ENCODE measurements at regions of chr19 and their contacts with region 1.

Region 1: DNA sequence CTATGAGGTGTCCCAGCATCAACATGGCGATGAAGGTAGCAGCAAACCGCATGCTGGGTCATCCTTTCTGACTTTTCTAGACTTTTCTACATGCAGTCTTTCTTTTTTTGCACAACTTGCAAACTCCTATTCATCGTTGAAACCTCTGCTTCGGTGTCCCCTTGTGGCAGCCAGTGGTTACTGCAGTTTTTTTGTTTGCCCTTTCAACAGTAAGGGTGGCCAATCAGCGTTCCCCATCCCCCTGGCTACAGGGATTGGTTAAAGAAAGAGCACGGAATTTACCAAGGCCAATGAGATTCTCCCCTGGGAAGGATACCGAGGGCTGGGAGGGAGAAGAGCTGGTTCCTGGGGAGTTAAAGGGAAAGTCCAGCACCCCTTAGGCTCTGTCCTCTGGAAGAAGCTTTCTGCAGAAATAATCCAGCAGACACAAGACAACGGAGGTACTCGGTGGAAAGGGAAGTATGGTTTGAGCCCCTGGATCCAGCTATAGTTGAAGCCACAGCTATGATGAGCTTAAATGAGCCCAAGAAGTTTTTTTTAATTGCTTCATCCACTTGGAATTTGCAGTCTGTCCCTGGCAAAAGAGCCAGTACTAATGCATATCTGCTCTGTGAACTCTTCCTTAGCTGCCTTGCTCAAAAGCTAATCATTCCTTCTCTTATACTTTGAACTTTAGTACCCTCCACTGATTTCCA is 5.6 kb upstream of the LSM4 start:
- DNase-seq: peak; percentile 76 to 94 (median 82)
- ATAC-seq: peak; percentile 99
- H3K4me3 ChIP-seq: peak overlapping the region; percentile 31
- H3K4me3 Mint-ChIP-seq: peak overlapping the region; percentile 47
- H3K27ac ChIP-seq: no peak overlapping the region
- H3K27ac Mint-ChIP-seq: peak overlapping the region; percentile 6
- H3K4me1 ChIP-seq: peaks cover 24% of the 10 kb centered on the region
- H3K4me1 Mint-ChIP-seq: peaks cover 17% of the 10 kb centered on the region
- H3K27me3 ChIP-seq: no peaks in the 10 kb centered on the region
- H3K27me3 Mint-ChIP-seq: no peaks in the 10 kb centered on the region
- CTCF ChIP-seq: peak; percentile 92

Region 2: DNA sequence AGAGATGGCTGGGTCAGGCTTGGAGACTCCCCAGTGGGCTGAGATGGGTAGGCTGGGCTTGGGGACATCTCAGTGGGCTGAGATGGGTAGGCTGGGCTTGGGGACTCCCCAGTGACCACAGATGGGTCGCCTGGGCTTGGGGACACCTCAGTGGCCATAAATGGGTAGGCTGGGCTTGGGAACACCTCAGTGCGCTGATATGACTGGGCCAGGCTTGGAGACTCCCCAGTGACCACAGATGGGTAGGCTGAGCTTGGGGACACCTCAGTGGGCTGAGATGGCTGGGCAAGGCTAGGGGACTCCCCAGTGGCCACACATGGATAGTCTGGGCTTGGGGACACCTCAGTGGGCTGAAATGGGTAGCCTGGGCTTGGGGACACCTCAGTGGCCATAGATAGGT is 67.0 kb before region 1 on chr19:
- CTCF ChIA-PET with region 1: no interaction called
- POLR2A ChIA-PET with region 1: no interaction called
- intact Hi-C with region 1: no loop called
- DNase-seq: peak in 1 of 14 experiments; percentile 50
- ATAC-seq: no peak
- H3K4me3 ChIP-seq: no peak overlapping the region
- H3K4me3 Mint-ChIP-seq: no peak overlapping the region
- H3K27ac ChIP-seq: no peak overlapping the region
- H3K27ac Mint-ChIP-seq: no peak overlapping the region
- H3K4me1 ChIP-seq: peaks cover 17% of the 10 kb centered on the region
- H3K4me1 Mint-ChIP-seq: peaks cover 5% of the 10 kb centered on the region
- H3K27me3 ChIP-seq: no peaks in the 10 kb centered on the region
- H3K27me3 Mint-ChIP-seq: no peaks in the 10 kb centered on the region
- CTCF ChIP-seq: no peak

Region 3: GRCh38 chr19:18291590-18292461 is 36.7 kb before region 1 on chr19:
- CTCF ChIA-PET with region 1: interaction called, 3 read pairs
- POLR2A ChIA-PET with region 1: interaction called, 761 read pairs
- intact Hi-C with region 1: loop called in 1 of 2 experiments (anchors 5 kb)
- DNase-seq: peak; percentile 51 to 93 (median 69)
- ATAC-seq: peak; percentile 41
- H3K4me3 ChIP-seq: peak overlapping the region; percentile 91
- H3K4me3 Mint-ChIP-seq: peak overlapping the region; percentile 89
- H3K27ac ChIP-seq: peak overlapping the region; percentile 96 to 100
- H3K27ac Mint-ChIP-seq: peak overlapping the region; percentile 91
- H3K4me1 ChIP-seq: peaks cover 67% of the 10 kb centered on the region
- H3K4me1 Mint-ChIP-seq: peaks cover 61% of the 10 kb centered on the region
- H3K27me3 ChIP-seq: no peaks in the 10 kb centered on the region
- H3K27me3 Mint-ChIP-seq: no peaks in the 10 kb centered on the region
- CTCF ChIP-seq: no peak

Region 4: DNA sequence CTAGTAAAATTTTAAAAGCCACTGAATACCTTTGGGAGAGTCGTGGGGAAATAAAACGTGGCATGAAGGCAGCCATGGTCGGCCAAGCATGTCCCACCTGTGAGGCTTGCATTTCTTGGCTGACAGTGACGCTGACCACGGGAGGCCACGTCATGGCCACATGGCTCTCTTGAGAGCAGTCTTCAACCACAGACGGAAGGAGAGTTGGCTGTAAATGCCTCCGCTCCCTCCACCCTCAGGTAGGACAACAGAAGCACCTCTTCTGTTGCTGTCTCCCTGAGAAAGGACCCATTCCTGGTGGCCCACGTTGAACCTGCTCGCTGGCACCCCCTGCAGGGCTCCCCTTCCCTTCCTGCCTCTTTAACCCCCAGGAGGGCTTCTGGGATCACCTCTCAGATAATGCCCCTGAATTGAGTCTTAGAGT is 79.6 kb after region 1 on chr19:
- CTCF ChIA-PET with region 1: no interaction called
- POLR2A ChIA-PET with region 1: no interaction called
- intact Hi-C with region 1: no loop called
- DNase-seq: peak in 2 of 14 experiments; percentile 43 to 51
- ATAC-seq: no peak
- H3K4me3 ChIP-seq: no peak overlapping the region
- H3K4me3 Mint-ChIP-seq: no peak overlapping the region
- H3K27ac ChIP-seq: no peak overlapping the region
- H3K27ac Mint-ChIP-seq: no peak overlapping the region
- H3K4me1 ChIP-seq: peaks cover 6% of the 10 kb centered on the region
- H3K4me1 Mint-ChIP-seq: peaks cover 5% of the 10 kb centered on the region
- H3K27me3 ChIP-seq: no peaks in the 10 kb centered on the region
- H3K27me3 Mint-ChIP-seq: peaks cover 10% of the 10 kb centered on the region
- CTCF ChIP-seq: peak; percentile 26